BJ (cell line): ENCODE measurements at regions of chr4 and their contacts with region 1.

Region 1: GRCh38 chr4:141241986-141242385 is 21.3 kb downstream of the ZNF330 start:
- DNase-seq: no peak
- H3K4me3 ChIP-seq: no peak overlapping the region
- H3K27me3 ChIP-seq: no peaks in the 10 kb centered on the region
- CTCF ChIP-seq: no peak

Region 2: DNA sequence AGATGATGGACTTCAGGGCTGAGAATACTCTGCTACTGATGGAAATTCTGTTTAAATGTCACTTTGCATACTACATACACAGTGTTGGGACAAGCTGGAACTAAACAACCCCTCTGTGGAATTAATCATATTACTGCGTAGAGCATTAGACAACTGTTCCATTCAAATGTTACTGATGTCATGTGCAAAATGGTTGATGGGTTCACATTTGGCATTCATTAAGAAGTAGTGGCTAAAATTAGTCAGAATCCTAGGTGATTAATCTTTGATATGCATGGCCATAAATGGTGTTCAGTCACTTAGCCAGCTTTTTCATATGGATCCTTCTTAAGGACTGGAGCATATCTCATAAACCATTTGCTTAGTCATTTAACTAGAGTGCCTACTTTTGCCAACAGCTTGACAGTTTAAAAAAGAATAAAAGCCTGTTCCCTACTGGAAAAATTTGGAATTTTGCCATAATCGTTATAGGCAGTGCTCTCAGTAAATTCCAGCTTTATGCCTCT is 213.9 kb before region 1 on chr4:
- CTCF ChIA-PET with region 1: no interaction called
- POLR2A ChIA-PET with region 1: no interaction called
- DNase-seq: peak; percentile 90
- H3K4me3 ChIP-seq: no peak overlapping the region
- H3K27me3 ChIP-seq: no peaks in the 10 kb centered on the region
- CTCF ChIP-seq: no peak

Region 3: DNA sequence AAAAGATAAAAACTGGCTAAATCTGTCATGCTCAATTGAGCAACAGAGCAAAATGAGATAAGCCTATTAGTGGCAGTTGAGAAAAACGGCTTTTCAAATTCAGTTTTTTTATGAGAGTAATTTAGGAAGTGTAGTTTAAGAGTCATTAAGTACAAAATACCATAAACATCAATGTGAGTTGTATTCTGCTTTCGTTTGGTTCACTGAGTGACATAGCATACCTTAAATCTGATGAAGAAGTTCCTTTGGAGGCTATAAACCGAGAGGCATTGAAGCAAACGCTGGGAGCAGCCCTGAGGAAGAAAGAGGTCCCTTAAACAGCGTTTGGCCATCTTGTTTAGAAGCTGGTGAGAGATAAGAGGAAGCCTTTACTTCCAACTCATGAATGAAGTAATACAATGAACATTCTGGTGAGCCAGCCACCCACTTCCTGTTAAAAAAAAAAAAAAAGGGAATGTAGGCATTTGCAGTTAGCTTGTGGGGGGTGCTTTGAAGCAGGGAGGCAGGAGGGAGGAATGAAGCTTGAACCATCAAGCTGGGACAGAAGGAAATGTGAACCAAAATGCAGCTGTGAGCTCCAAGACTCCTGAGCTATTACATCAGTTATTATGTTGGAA is 111.0 kb after region 1 on chr4:
- CTCF ChIA-PET with region 1: no interaction called
- POLR2A ChIA-PET with region 1: interaction called, 10 read pairs
- DNase-seq: peak; percentile 41
- H3K4me3 ChIP-seq: no peak overlapping the region
- H3K27me3 ChIP-seq: no peaks in the 10 kb centered on the region
- CTCF ChIP-seq: no peak